Ascending aorta (tissue), 2 donors: ENCODE measurements at regions of chr4 and their contacts with region 1.

Region 1: DNA sequence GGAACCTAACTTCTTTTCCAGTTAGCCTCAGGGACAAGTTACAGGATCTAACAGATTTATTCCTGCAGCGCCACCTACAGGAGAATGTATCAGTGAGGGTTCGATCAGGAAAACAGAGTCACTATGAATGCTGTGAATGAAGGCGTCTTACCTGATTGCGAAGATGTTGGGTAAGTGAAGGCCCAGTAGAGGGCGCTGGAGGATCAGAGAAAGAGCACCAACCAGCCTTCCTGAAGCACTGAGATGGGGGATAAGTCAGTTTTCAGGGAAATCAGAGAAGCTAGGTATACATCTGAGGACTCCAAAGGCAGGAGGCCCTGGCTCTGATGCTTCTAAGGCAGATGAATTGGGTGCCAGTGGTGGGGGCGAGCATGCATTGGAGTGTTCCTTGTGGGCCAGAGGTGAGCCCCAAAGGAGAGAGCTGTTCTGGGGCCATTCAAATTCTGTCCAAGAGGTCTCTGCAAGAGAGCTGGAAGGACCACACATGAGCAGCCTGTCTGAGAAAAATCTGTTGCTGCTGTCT is 169.9 kb upstream of the AADAT start:
- DNase-seq: peak in 1 of 2 donors; percentile 74
- H3K4me3 ChIP-seq: no peak overlapping the region
- H3K27ac ChIP-seq: no peak overlapping the region
- H3K4me1 ChIP-seq: no peaks in the 10 kb centered on the region
- H3K27me3 ChIP-seq: no peaks in the 10 kb centered on the region
- CTCF ChIP-seq: peak; percentile 51 to 78 (median 70)

Region 2: DNA sequence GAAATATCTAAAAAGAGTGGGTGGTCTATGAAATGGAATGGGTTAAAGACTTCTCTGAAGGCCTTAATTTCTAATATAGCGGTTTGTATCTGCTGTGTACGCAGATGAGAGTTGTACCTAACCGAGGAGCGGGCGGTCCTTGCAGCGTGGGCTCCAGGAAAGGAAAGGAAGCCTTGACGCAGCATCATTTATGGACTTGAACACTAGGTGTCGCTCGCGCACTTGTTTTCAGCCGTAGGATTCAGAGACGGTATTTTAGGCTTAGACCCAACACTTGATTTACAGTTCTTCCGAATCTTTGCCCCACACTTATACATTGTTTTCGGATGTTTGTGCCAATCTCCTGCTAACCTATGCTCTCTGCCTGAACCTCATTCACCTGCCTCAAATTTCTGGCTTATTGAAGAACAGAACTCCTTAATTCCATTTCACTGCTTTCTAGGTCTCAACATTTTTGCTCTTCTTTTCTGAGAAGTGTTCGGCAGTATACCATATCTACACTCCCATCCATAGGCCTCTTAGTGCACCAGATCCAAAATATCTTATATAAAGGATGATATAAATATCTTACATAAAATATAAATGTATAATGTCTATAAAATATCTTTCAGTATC is 121.0 kb before region 1 on chr4:
- intact Hi-C with region 1: loop called (anchors 10 kb)
- DNase-seq: peak in 1 of 2 donors; percentile 81
- H3K4me3 ChIP-seq: peak overlapping the region in 1 of 2 donors; percentile 19
- H3K27ac ChIP-seq: no peak overlapping the region
- H3K4me1 ChIP-seq: no peaks in the 10 kb centered on the region
- H3K27me3 ChIP-seq: no peaks in the 10 kb centered on the region
- CTCF ChIP-seq: peak; percentile 31 to 81 (median 63)